ENCODE measurements at regions of chr22 and their contacts with region 1.

Region 1: GRCh38 chr22:29480512-29481264 is 670 bp downstream of the NEFH start:
- DNase-seq: peak; percentile 96
- H3K4me3 ChIP-seq: peak overlapping the region; percentile 41 to 47; a peak in 3 of 4 replicates
- H3K27ac ChIP-seq: peak overlapping the region in 1 of 2 experiments; percentile 23; a peak in 1 of 4 replicates
- H3K4me1 ChIP-seq: peaks cover 0 to 32% of the 10 kb centered on the region in 2 experiments; a peak in 1 of 4 replicates
- H3K27me3 ChIP-seq: peaks cover 9% of the 10 kb centered on the region; the same call in 1 of the 2 replicates
- CTCF ChIP-seq: no peak; the same call in 1 of the 2 replicates
- EP300 ChIP-seq: no peak; a peak in 1 of 4 replicates
- RAD21 ChIP-seq: peak; percentile 48

Region 2: GRCh38 chr22:29470159-29470855 is 10.4 kb before region 1 on chr22:
- CTCF ChIA-PET with region 1: interaction called, 12 read pairs
- POLR2A ChIA-PET with region 1: interaction called, 5 read pairs
- DNase-seq: peak; percentile 70
- H3K4me3 ChIP-seq: no peak overlapping the region
- H3K27ac ChIP-seq: no peak overlapping the region
- H3K4me1 ChIP-seq: no peaks in the 10 kb centered on the region
- H3K27me3 ChIP-seq: no peaks in the 10 kb centered on the region
- CTCF ChIP-seq: peak; percentile 56
- EP300 ChIP-seq: no peak
- RAD21 ChIP-seq: no peak

Region 3: DNA sequence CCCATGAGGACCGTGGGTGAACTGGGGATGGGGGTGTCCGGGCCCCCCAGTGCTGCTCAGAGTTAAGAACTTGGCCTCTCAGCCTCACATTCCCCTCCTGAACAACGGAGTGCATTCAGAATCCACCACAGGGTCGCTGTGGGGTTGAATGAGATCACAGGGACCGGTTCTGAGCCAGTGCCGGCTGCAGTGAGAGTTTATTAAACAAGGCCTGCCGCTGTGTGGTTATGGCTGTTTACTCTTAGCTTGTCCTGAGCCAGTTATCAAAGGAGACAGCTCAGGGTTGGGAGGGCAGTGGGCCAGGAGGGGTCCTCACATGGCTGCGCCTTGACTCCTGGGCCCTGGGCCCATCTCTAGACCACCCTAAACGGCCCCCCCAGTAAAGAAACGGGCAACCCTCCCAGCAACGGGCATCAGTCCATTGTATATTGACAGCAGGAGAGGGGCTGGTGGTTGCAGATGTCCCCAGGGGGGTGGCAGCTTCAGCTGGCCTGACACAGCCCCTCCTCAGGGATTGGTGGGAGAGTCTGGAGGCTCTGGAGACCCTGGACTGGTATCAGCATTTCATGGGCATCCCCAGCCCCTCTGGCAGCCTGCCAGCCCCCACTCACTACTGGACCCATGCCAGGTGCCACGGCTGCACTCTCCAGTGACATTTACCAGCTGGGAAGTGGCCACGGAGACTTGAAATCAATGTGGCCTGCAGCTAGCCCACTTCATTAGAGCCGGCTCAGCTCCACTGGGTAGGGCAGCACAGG is 224.0 kb after region 1 on chr22:
- CTCF ChIA-PET with region 1: no interaction called
- POLR2A ChIA-PET with region 1: no interaction called
- DNase-seq: peak; percentile 89
- H3K4me3 ChIP-seq: no peak overlapping the region
- H3K27ac ChIP-seq: peak overlapping the region in 1 of 2 experiments; percentile 86; a peak in 2 of 4 replicates
- H3K4me1 ChIP-seq: peaks cover 12 to 83% of the 10 kb centered on the region in 2 experiments; a peak in 2 of 4 replicates
- H3K27me3 ChIP-seq: no peaks in the 10 kb centered on the region
- CTCF ChIP-seq: no peak
- EP300 ChIP-seq: peak in 1 of 2 experiments; percentile 68; a peak in 1 of 4 replicates
- RAD21 ChIP-seq: no peak; the same call in 1 of the 2 replicates

Measured in SK-N-SH (cell line).